Activated T-helper 2 cell treated with anti-CD3 and anti-CD28 coated beads, Interferon-gamma antibody, Interleukin-2, Interleukin-4, amounts not matched to agents 10 μg/mL and 5 μg/mL and 100 μg/mL, durations not matched to agents 14 hours and 24 hours and 36 hours (primary cell): ENCODE measurements at regions of chr1 and their contacts with region 1.

Region 1: DNA sequence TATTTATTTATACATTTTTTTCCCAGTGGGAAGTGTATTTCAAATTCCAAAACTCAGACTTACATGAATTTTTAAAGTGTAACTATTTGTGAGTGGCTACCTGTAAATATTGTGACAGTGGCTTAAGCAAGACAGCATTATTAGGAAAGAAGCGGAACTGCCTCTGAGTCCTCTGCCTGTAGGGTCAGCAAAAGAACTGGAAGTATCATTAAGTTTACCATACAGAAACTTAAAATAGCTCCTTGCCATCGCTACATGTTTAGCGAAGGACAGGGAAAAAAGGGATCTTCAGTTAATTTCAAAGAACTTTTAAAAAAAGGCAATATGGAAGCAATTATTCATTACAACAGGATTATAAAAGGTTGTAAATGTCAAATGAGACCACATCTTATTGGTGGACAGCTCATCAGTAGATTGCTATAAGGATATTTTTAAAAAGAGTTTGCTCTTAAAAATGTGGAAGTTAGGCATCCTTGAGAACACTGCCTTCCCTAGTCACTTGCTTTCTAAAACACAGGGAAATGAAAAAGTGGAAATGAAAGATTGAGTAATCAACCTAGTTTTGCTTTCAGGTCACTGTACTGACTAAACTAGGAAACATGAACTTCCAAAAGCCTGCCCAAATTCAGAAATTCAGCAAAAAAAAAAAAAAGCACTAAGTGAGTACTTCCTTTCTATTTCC is 39.2 kb downstream of the NSL1 start:
- DNase-seq: no peak
- H3K4me3 Mint-ChIP-seq: no peak overlapping the region
- H3K27ac Mint-ChIP-seq: no peak overlapping the region
- H3K4me1 Mint-ChIP-seq: peaks cover 36% of the 10 kb centered on the region
- H3K27me3 Mint-ChIP-seq: no peaks in the 10 kb centered on the region

Region 2: GRCh38 chr1:212738330-212738729 is 14.1 kb before region 1 on chr1:
- intact Hi-C with region 1: loop called (anchors 1 kb)
- DNase-seq: no peak
- H3K4me3 Mint-ChIP-seq: no peak overlapping the region
- H3K27ac Mint-ChIP-seq: peak overlapping the region; percentile 88
- H3K4me1 Mint-ChIP-seq: peaks cover 40% of the 10 kb centered on the region
- H3K27me3 Mint-ChIP-seq: no peaks in the 10 kb centered on the region

Region 3: GRCh38 chr1:212769459-212770167 is 17.2 kb after region 1 on chr1:
- intact Hi-C with region 1: loop called (anchors 1 kb)
- DNase-seq: no peak
- H3K4me3 Mint-ChIP-seq: no peak overlapping the region
- H3K27ac Mint-ChIP-seq: peak overlapping the region; percentile 69
- H3K4me1 Mint-ChIP-seq: peaks cover 41% of the 10 kb centered on the region
- H3K27me3 Mint-ChIP-seq: no peaks in the 10 kb centered on the region

Region 4: GRCh38 chr1:212827824-212828278 is 75.5 kb after region 1 on chr1:
- intact Hi-C with region 1: no loop called
- DNase-seq: no peak
- H3K4me3 Mint-ChIP-seq: no peak overlapping the region
- H3K27ac Mint-ChIP-seq: no peak overlapping the region
- H3K4me1 Mint-ChIP-seq: peaks cover 3% of the 10 kb centered on the region
- H3K27me3 Mint-ChIP-seq: no peaks in the 10 kb centered on the region